ENCODE measurements at regions of chr2 and their contacts with region 1.

Region 1: DNA sequence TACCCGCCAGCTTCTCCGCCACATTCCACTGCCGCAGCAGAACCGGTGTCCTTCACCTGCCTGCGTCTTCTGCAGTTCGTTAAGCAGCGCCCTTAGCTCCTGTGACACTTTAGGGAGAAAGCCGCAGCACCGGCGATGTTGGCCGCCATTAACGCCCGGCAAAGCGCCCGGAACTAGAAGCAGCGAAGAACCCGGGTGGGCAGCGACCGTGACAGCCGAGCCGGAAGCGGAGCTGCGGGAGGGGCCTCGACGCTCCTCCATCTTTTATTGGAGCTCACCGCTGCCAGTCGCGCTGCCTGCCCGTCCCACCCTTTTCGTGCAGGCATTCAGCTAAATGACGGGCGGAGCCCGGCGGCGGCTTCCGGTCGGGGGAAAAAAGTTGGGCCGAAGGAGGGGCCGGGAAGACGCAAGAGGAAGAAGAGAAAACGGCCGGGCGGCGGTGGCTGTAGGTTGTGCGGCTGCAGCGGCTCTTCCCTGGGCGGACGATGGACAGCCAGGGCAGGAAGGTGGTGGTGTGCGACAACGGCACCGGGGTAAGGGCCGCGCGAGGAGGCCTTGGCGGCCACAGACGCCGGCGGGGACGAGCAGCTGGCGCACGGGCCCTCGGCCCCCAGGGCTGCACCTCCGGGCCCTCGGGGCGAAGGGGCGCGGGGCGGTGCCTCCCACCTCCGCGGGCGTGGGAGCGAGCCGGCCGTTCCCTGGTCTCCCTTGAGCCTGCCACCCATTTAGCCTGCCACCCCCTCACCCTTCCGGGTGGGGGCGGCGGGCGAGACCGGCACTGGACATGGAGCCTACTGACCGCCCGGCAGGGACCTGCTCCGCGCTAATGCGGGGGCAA is at the start of gene ACTR2:
- DNase-seq: peak; percentile 88
- ATAC-seq: peak; percentile 90
- H3K4me3 Mint-ChIP-seq: peak within 1 kb of the TSS; percentile 99
- H3K27ac Mint-ChIP-seq: peak within 1 kb of the TSS; percentile 100
- H3K4me1 Mint-ChIP-seq: peaks cover 45% of the 10 kb centered on the region
- H3K27me3 Mint-ChIP-seq: no peaks in the 10 kb centered on the region
- CTCF ChIP-seq: no peak
- total RNA-seq, gene ACTR2: 484 and 493 TPM in 2 replicates

Region 2: GRCh38 chr2:64018923-64019718 is 1208.5 kb before region 1 on chr2 and contains the start of gene VPS54:
- CTCF ChIA-PET with region 1: no interaction called
- POLR2A ChIA-PET with region 1: interaction called, 4 read pairs
- intact Hi-C with region 1: loop called (anchors 5 kb)
- DNase-seq: peak; percentile 66
- ATAC-seq: peak; percentile 80
- H3K4me3 Mint-ChIP-seq: peak within 1 kb of the TSS; percentile 97
- H3K27ac Mint-ChIP-seq: peak within 1 kb of the TSS; percentile 92
- H3K4me1 Mint-ChIP-seq: peaks cover 34% of the 10 kb centered on the region
- H3K27me3 Mint-ChIP-seq: no peaks in the 10 kb centered on the region
- CTCF ChIP-seq: no peak
- total RNA-seq, gene VPS54: 11.5 and 13.1 TPM in 2 replicates

Region 3: DNA sequence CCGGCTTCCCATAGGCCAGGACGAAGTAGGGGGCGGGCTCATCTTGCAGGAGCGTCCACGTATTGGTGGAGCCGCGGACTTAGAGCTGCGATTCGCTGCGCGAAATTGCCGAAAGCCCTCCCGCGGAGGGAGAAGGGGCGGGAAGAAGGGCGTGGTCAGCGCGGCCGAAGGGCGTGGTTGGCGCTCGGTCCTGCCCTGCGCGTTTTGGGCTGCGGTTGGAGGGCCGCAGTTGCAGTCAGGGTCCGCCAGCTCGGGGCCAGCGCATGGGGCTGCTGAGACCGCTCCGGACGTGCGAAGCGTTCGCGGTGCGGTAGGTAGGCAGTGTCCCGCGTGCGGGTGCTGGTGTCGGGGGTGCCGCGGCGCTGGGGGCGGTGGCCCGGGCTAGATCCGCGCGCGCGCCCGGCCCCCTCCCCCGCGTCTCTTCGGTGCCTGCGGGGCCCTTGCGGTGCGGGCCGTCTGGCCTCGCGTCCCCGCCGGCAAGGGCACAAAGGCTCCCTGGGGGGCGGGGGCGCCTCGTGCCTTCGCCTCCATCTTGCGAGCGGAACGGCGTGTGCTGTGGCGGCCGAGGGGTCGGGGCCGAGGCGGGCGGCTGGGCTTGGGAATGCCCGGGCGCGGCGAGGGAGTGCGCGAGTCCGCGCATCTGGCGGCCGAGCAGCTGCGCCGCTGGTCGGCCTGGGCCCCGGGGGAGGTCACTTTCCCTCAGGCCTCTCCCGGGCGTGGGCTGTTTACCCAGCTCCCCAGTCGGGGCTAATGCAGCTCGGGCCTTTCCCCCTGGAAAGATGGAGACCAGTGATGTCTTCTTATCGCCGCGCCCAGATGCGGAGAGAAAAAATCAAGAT is 171.2 kb before region 1 on chr2 and contains the start of gene CEP68:
- CTCF ChIA-PET with region 1: no interaction called
- POLR2A ChIA-PET with region 1: interaction called, 35 read pairs
- intact Hi-C with region 1: loop called (anchors 1 kb)
- DNase-seq: peak; percentile 95
- ATAC-seq: peak; percentile 91
- H3K4me3 Mint-ChIP-seq: peak within 1 kb of the TSS; percentile 97
- H3K27ac Mint-ChIP-seq: peak within 1 kb of the TSS; percentile 95
- H3K4me1 Mint-ChIP-seq: peaks cover 75% of the 10 kb centered on the region
- H3K27me3 Mint-ChIP-seq: no peaks in the 10 kb centered on the region
- CTCF ChIP-seq: no peak
- total RNA-seq, gene CEP68: 16.6 and 17.9 TPM in 2 replicates

Region 4: DNA sequence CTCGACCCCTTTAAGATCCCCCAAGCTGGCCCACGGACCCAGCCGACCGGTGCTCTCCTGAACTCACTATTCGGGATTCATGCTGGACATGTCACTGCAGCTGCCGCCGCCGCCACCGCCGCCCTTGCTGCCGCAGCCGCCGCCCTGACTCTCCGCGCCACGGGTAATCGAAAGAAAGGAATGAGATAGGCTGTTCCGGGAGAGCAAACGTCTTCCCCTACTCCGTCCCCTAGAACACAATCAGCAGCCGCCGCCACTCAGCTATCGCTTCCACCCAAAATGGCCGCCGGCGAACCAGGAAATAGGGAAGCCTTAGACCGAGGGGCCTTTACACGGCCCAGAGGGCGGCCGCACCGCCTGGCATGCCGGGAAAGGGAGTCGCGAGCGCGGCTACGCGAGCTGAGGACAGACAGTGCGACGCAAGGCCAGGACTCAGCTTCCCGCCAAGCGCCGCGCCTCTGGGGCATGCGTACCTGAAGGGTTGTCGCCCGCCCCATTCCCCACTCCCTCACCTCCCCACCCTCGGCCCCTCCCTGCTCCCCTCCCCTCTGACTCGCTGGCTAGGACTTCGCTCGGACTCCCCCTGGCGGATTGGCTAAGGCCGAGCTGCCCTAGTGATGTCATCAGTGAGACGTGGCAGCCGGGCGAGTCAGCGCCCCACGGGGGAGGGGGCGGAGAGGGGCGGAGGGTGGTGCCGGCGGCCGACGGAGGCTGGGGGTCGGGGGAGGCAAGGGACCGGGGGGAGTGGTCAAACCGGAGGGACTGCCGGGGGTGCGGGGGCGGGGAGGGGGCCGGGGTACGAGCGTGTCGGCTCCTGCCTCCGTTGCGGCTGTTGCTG is 97.6 kb before region 1 on chr2 and contains the start of gene RAB1A:
- CTCF ChIA-PET with region 1: interaction called, 3 read pairs
- POLR2A ChIA-PET with region 1: interaction called, 79 read pairs
- intact Hi-C with region 1: loop called (anchors 1 kb)
- DNase-seq: peak; percentile 91
- ATAC-seq: peak; percentile 93
- H3K4me3 Mint-ChIP-seq: peak within 1 kb of the TSS; percentile 100
- H3K27ac Mint-ChIP-seq: peak within 1 kb of the TSS; percentile 100
- H3K4me1 Mint-ChIP-seq: peaks cover 49% of the 10 kb centered on the region
- H3K27me3 Mint-ChIP-seq: no peaks in the 10 kb centered on the region
- CTCF ChIP-seq: no peak
- total RNA-seq, gene RAB1A: 45.0 and 46.4 TPM in 2 replicates

Region 5: DNA sequence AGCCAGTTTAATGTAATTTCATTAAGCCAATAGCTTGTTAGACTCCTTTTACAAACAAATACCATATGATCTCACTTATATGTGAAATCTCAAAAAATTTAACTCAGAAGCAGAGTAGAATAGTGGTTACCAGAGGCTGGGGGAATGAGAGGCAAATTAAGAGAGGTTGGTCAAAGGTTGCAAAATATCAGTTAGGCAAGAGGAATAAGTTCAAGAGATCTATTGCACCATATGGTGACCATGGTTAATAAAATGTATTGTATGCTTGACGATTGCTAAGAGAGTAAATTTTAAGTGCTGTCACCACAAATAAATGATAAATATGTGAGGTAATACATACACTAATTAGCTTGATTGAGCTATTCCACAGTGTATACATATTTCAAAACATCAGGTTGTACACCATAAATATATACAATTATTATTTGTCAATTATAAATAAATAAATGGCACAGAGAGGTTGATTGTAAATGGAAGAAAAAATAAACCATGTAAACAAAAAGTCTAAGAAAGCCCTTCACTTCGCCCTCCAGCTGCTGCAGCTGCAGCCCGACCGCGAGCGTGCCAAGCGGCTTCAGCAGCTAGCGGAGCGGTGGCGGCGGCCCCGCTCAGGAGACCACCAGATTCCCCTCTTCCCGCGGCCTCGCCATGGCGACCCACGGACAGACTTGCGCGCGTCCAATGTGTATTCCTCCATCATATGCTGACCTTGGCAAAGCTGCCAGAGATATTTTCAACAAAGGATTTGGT is 23.0 kb before region 1 on chr2:
- CTCF ChIA-PET with region 1: no interaction called
- POLR2A ChIA-PET with region 1: interaction called, 14 read pairs
- intact Hi-C with region 1: no loop called
- DNase-seq: no peak
- ATAC-seq: no peak
- H3K4me3 Mint-ChIP-seq: no peak overlapping the region
- H3K27ac Mint-ChIP-seq: no peak overlapping the region
- H3K4me1 Mint-ChIP-seq: peaks cover 8% of the 10 kb centered on the region
- H3K27me3 Mint-ChIP-seq: no peaks in the 10 kb centered on the region
- CTCF ChIP-seq: no peak

Region 6: DNA sequence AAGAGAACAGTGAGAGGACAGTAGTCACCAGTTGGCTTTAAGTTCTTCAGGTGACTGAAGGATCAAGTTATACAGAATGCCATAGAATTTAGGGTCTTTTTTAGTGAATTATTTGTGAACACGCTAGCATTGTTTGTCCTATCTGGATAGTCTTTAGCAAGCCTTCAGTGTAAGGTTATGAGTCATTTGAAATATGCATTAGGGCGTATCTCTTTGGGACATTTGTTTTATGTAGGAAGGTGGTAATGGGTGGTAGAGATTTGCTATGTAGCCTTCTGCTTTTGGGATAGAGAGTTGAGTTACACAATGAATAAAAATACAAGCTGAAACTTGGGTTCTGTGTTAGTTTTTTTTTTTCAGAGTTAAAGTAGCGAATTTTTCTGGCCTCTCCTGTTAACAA is 13.0 kb after region 1 on chr2:
- CTCF ChIA-PET with region 1: no interaction called
- POLR2A ChIA-PET with region 1: interaction called, 18 read pairs
- intact Hi-C with region 1: loop called (anchors 1 kb)
- DNase-seq: no peak
- ATAC-seq: no peak
- H3K4me3 Mint-ChIP-seq: no peak overlapping the region
- H3K27ac Mint-ChIP-seq: no peak overlapping the region
- H3K4me1 Mint-ChIP-seq: peaks cover 46% of the 10 kb centered on the region
- H3K27me3 Mint-ChIP-seq: no peaks in the 10 kb centered on the region
- CTCF ChIP-seq: no peak

Region 7: GRCh38 chr2:66080127-66080526 is 852.5 kb after region 1 on chr2:
- CTCF ChIA-PET with region 1: no interaction called
- POLR2A ChIA-PET with region 1: no interaction called
- intact Hi-C with region 1: no loop called
- DNase-seq: no peak
- ATAC-seq: no peak
- H3K4me3 Mint-ChIP-seq: no peak overlapping the region
- H3K27ac Mint-ChIP-seq: no peak overlapping the region
- H3K4me1 Mint-ChIP-seq: no peaks in the 10 kb centered on the region
- H3K27me3 Mint-ChIP-seq: no peaks in the 10 kb centered on the region
- CTCF ChIP-seq: no peak

Region 8: DNA sequence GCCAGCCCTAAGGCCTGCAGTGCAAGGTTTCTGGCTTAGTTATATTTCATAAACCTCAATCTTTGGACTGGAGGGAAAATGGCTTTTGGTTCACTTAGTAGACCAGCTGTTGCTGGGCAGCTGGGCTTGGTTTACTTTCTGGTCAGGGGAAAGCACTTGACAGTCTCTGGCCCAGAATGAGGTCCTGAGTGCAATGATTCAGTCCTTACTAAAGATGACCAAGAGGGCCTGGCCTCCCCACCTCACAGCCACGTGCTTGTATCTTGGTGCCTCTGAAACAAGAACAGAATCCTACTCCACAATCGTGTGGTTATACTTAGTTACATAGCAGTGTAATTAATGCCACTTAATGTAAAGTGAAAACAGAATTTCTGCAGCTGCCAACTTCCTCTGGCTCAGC is 881.8 kb after region 1 on chr2:
- CTCF ChIA-PET with region 1: no interaction called
- POLR2A ChIA-PET with region 1: no interaction called
- intact Hi-C with region 1: no loop called
- DNase-seq: no peak
- ATAC-seq: no peak
- H3K4me3 Mint-ChIP-seq: no peak overlapping the region
- H3K27ac Mint-ChIP-seq: no peak overlapping the region
- H3K4me1 Mint-ChIP-seq: no peaks in the 10 kb centered on the region
- H3K27me3 Mint-ChIP-seq: no peaks in the 10 kb centered on the region
- CTCF ChIP-seq: no peak

Measured in activated B cell treated with CpG ODN at 0.5 μM for 24 hours (primary cell).